Mammary epithelial cell (primary cell): ENCODE measurements at regions of chr4 and their contacts with region 1.

Region 1: DNA sequence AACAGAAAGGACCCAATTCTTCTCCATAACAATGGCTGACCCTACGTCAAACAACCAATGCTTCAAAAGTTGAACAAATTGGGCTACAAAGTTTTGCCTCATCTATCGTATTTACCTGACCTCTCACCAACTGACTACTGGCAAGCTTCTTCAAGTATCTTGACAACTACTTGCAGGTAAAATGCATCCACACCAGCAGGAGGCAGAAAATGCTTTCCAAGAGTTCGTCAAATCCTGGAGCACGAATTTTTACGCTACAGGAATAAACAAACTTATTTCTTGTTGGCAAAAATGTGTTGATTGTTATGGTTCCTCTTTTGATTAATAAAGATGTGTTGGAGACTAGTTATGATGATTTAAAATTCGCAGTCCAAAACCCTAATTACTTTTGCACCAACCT is 6.7 kb upstream of the GAB1 start:
- DNase-seq: no peak
- H3K4me3 ChIP-seq: no peak overlapping the region
- H3K27ac ChIP-seq: no peak overlapping the region
- H3K4me1 ChIP-seq: no peaks in the 10 kb centered on the region
- H3K27me3 ChIP-seq: no peaks in the 10 kb centered on the region
- CTCF ChIP-seq: no peak

Region 2: GRCh38 chr4:143411527-143412480 is 81.8 kb after region 1 on chr4:
- CTCF ChIA-PET with region 1: no interaction called
- dilution Hi-C with region 1: loop called (anchors 5 kb)
- in situ Hi-C with region 1: no loop called
- intact Hi-C with region 1: no loop called
- DNase-seq: peak; percentile 5
- H3K4me3 ChIP-seq: no peak overlapping the region
- H3K27ac ChIP-seq: no peak overlapping the region
- H3K4me1 ChIP-seq: no peaks in the 10 kb centered on the region
- H3K27me3 ChIP-seq: no peaks in the 10 kb centered on the region
- CTCF ChIP-seq: no peak